OCI-LY7 (cell line): ENCODE measurements at regions of chr6 and their contacts with region 1.

Region 1: GRCh38 chr6:156564127-156564806 is 212.9 kb upstream of the ARID1B start:
- DNase-seq: peak; percentile 89
- H3K4me3 ChIP-seq: peak overlapping the region; percentile 25
- H3K27ac ChIP-seq: peak overlapping the region; percentile 57
- H3K4me1 ChIP-seq: peaks cover 23% of the 10 kb centered on the region
- CTCF ChIP-seq: peak; percentile 100

Region 2: DNA sequence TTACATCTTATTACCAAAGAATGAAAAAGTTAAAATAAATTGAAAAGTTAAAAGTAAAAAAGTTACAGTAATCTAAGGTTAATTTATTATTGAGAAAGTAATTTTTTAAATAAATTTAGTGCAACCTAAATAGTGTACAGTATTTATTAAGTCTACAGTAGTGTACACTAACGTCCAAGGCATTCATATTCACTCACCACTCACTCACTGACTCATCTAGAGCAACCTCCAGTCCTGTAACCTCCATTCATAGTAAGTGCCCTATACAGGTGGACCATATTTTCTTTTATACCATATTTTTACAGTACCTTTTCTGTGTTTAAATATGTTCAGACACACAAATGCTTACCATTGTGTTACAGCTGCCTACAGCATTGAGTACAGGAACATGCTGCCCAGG is 483.9 kb before region 1 on chr6:
- CTCF ChIA-PET with region 1: no interaction called
- POLR2A ChIA-PET with region 1: no interaction called
- intact Hi-C with region 1: no loop called
- DNase-seq: no peak
- H3K4me3 ChIP-seq: no peak overlapping the region
- H3K27ac ChIP-seq: no peak overlapping the region
- H3K4me1 ChIP-seq: no peaks in the 10 kb centered on the region
- CTCF ChIP-seq: no peak

Region 3: DNA sequence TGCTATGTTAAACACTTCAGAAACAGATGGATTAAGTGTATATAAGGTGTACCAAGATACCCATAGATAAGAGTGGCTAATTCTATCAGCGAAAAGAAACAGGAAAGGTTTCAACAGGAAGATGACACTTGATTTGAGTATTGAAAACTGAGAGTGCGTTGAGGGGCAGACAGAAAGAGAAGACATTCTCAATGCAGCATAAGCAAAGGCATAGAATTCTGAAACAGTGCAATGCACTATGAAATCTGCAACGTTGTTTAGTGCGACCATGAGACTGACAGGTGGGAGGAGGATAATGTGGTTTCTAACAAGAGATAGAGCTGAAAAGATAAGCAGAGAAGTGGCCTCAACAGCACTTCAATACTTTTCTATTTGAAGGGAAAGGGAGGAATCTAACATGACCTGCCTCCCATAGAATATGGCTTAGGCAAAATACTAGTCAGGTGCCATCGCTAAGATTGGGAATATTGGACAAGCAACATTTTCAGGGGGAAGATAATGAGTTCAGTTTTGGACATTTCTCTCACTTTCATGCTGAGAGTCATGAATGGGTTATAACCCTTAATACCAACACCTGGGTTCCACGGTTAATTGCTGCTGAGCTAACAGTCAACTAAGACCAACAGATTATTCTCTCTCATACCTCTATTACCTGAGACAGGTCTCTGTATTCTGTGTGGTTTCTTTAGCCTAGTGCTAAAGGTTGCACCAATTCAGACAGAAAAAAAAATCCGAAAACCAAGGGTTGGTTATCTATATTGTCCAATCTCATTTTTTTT is 100.0 kb before region 1 on chr6:
- CTCF ChIA-PET with region 1: no interaction called
- POLR2A ChIA-PET with region 1: no interaction called
- intact Hi-C with region 1: no loop called
- DNase-seq: no peak
- H3K4me3 ChIP-seq: no peak overlapping the region
- H3K27ac ChIP-seq: no peak overlapping the region
- H3K4me1 ChIP-seq: peaks cover 17% of the 10 kb centered on the region
- CTCF ChIP-seq: no peak

Region 4: GRCh38 chr6:156634951-156635371 is 70.7 kb after region 1 on chr6:
- CTCF ChIA-PET with region 1: no interaction called
- POLR2A ChIA-PET with region 1: interaction called, 3 read pairs
- intact Hi-C with region 1: loop called (anchors 1 kb)
- DNase-seq: peak; percentile 25
- H3K4me3 ChIP-seq: no peak overlapping the region
- H3K27ac ChIP-seq: peak overlapping the region; percentile 90
- H3K4me1 ChIP-seq: peaks cover 51% of the 10 kb centered on the region
- CTCF ChIP-seq: no peak

Region 5: DNA sequence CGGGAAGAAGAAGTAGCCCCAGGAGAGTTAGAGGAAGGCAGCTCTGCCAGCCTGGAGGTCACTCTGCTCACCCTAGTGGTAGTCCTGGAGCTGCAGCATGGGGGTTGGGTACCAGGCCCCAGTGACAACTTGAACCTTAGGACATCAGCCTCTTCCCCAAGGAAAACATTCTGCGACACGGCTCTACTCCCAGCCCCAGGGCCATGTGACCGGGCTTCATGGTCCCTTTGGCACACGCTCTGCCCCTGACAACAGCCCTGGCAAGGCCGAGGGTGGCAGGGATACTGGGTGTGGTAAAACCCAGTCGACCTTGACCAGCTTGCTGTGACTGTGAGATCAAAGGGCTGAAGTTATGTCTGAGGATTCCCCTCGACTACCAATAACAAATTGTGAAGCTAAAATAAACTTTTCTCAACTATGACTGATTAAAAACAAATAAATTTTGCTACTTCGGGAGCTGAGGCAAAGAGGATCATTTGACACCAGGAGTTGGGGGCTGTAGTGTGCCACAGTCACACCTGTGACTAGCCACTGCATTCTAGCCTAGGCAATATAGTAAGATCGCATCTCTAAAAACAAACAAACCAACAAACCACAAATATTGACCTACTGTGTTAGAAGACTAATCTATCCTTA is 188.5 kb after region 1 on chr6:
- CTCF ChIA-PET with region 1: no interaction called
- POLR2A ChIA-PET with region 1: no interaction called
- intact Hi-C with region 1: loop called (anchors 2 kb)
- DNase-seq: peak; percentile 78
- H3K4me3 ChIP-seq: peak overlapping the region; percentile 43
- H3K27ac ChIP-seq: peak overlapping the region; percentile 77
- H3K4me1 ChIP-seq: peaks cover 68% of the 10 kb centered on the region
- CTCF ChIP-seq: peak; percentile 82

Region 6: GRCh38 chr6:156816505-156816904 is 252.2 kb after region 1 on chr6:
- CTCF ChIA-PET with region 1: no interaction called
- POLR2A ChIA-PET with region 1: no interaction called
- intact Hi-C with region 1: no loop called
- DNase-seq: no peak
- H3K4me3 ChIP-seq: no peak overlapping the region
- H3K27ac ChIP-seq: no peak overlapping the region
- H3K4me1 ChIP-seq: peaks cover 18% of the 10 kb centered on the region
- CTCF ChIP-seq: no peak

Region 7: GRCh38 chr6:156953479-156954146 is 389.3 kb after region 1 on chr6:
- CTCF ChIA-PET with region 1: no interaction called
- POLR2A ChIA-PET with region 1: no interaction called
- intact Hi-C with region 1: loop called (anchors 10 kb)
- DNase-seq: peak; percentile 19
- H3K4me3 ChIP-seq: no peak overlapping the region
- H3K27ac ChIP-seq: no peak overlapping the region
- H3K4me1 ChIP-seq: peaks cover 13% of the 10 kb centered on the region
- CTCF ChIP-seq: no peak; the same call in 1 of the 2 replicates

Region 8: GRCh38 chr6:157184202-157185020 is 620.1 kb after region 1 on chr6:
- CTCF ChIA-PET with region 1: no interaction called
- POLR2A ChIA-PET with region 1: no interaction called
- intact Hi-C with region 1: loop called (anchors 1 kb)
- DNase-seq: peak; percentile 56
- H3K4me3 ChIP-seq: no peak overlapping the region
- H3K27ac ChIP-seq: no peak overlapping the region
- H3K4me1 ChIP-seq: no peaks in the 10 kb centered on the region
- CTCF ChIP-seq: peak; percentile 85